Right ventricle myocardium superior (tissue), 1 donor: ENCODE measurements at regions of chrX and their contacts with region 1.

Region 1: GRCh38 chrX:40013266-40014195 is 84.2 kb downstream of the BCOR start:
- DNase-seq: peak; percentile 81
- ATAC-seq: peak; percentile 64

Region 2: GRCh38 chrX:39910651-39911050 is 102.9 kb before region 1 on chrX:
- intact Hi-C with region 1: loop called (anchors 10 kb)
- DNase-seq: no peak
- ATAC-seq: peak; percentile 28

Region 3: DNA sequence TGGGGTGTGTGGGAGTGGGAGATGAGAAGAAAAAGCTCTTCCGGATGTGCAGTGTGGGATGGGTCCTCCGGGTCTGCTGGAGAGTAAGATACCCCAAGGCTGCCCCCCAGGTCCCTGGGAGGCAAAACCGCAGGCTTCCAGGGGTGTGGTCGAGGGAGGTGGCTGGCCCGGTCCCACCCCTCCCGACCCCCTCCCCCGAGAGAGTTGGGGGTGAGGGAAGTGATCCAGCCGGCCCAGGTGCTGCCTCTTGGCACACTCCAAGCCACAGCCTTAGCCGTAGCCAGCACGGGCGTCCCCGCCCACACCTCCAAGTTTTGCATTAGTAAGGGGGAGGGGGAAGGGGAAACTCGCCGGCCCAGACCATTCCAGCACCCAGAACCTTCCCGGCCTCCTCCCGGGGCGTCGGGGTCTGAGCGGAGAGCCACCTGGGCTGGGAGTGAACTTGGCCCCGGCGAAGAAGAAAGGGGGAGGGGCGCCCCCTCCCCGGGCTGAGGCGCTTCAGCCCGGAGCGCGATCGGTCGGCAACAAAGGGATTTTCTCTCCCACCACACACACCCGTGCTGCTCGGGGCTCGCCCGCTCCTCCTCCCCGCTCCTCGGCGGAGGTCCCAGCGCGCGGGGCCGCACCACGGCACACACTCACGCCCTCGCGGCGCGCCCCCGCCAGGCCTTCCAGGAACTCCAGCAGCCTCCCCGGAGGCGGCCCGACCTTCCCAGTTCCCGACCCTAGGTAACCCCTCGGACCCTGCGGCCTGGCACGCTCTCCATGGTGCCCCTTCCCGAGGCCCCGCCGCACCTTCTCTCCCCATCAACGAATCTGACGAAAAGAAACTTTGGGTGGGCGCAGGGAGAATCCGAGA is 69.8 kb after region 1 on chrX:
- intact Hi-C with region 1: loop called (anchors 10 kb)
- DNase-seq: peak; percentile 51
- ATAC-seq: peak; percentile 49